Left cardiac atrium (tissue), 4 donors: ENCODE measurements at regions of chr1 and their contacts with region 1.

Region 1: DNA sequence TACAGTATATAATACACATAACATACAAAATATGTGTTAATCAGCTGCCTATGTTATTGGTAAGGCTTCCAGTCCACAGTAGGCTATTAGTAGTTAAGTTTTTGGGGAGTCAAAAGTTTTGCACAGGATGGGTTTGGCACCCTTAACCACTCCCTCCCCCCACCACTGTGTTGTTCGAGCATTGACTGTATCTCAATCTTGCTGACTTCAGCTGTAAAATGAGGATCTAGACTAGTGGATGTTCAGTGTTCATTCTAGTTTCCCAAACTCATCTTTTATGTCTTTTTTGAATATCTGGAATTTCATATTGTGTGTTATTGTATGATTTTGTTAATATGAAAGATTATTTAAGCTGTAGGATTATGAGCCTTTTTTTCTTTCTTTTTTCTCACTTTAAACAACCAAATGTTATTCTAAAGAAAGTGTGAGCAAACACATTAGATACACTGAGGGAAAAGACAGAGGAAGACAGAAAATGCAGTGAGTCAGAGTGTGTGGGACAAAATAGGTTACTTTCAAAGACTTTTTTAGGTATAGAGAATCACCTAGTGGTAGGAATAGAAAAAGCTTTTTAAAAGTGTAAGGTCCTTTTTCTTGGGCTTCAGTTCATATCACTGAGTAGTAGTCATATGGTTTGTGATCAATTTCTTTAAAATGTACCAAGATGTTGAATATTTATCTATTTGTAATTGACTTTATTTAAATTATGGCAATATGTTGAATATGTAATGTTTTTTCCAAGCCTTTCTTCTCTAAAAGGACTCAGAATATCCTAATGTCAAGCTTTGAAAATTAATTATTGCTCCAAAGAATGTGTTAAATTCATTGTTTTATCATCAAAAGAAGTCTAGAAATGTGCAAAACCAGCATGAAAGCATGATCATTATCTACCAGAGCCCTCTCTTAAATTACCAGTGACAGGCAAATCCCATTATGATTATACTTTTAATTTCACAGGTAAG is 17.9 kb upstream of the CENPF start:
- DNase-seq: no peak
- ATAC-seq: peak; percentile 71 to 83

Region 2: DNA sequence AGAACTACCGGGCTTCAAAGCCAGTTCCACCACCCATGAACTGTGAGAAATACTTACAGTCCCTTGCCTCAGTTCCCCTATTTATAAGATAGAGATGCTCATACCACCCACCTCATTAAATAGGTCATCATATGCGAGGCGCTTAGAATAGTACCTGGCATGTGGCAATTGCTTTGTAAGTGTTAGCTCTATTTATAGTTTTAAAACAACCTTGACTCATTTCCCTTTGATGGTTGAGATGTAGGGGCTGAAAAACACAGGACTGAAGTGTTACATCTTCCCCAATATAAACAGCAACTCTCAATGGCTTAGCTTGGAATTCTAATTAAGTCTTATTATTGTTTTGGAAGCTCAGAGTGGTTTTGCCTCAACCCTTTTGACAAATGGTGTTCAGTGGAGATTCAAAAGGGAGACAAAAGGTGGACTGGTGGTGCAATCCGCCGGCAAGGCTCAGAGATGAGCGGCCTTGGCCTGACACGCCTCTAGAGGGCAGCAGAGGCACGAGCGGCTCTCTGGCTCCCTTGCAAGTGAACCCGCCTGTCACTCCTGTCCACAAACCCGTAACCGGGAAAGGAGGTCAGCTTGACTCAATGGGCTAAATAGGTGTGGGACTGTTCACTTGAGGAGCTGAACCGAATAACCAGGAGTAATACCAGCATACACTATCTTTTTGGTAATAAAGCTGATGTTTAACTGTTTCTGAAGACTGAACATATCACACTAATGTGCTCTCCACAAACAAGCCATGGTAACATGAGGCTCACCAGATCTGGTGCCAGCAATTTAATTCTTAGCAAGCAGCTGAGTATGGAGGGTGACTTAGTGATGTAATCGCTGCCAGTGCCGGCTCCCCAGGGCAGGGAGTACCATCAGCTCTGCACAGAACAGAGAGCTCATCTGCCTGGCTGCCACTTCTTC is 323.6 kb before region 1 on chr1:
- intact Hi-C with region 1: loop called in 1 of 2 experiments (anchors 10 kb)
- DNase-seq: peak; percentile 83
- ATAC-seq: peak; percentile 97

Region 3: DNA sequence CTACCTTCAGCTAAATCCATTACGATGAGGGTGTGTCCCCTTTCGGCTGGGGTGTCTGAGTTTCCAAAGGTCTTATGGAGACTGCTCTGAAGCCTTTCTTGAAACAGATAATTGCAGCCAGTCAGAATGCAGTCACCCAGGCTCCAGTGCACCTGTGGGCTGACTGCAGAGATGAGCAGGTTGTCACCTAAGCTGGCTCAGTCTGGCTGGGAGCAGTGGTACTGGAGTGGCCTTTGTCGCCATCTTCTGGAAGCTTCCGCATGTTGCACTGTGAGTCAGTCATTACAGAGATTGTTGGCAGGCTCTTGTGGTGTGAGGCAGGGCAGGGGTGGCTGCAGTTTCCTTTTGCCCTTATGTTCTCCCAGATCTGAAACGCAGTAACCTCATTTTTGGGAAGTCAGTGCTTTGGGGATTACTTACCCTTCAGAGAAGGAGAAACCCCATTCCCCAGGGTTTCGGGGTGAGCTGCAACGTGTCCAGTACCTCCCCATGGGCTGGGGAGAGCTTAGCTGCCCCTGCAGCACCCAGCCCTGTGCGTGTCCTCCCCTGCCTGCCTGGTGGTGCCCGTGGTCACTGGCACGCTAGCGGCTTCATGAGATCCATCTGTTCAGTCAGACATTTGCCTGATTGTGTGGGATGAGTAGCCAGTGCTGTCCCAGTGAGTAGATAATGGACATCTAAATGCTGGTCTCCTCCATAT is 256.2 kb before region 1 on chr1:
- intact Hi-C with region 1: loop called (anchors 2 to 5 kb)
- DNase-seq: peak; percentile 80
- ATAC-seq: peak; percentile 92 to 93

Region 4: DNA sequence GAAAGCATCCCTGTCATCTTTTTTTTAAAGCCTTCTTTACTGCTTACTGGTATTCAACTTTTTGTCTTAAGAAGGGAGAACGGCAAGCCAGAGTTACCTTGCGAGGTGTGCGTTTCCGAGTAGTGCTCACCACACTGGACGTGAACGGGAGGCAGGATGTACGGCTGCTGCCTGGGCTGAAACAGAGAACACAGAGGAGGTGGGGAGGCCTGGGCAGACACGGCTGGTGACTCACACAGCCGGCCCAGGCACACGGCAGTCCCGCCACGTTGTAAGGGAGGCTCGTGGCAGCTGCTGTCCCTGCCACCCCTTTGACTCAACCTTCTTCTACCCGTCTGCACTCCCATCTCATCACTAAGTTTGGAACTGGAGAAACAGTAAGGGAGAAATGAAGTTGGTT is 198.3 kb before region 1 on chr1:
- intact Hi-C with region 1: loop called in 1 of 2 experiments (anchors 10 kb)
- DNase-seq: no peak
- ATAC-seq: no peak